Activated CD8-positive, alpha-beta T cell treated with anti-CD3 and anti-CD28 coated beads, Interleukin-2, amount 10 ng/mL, durations not matched to agents 7 days and 5 days (primary cell): ENCODE measurements at regions of chr1 and their contacts with region 1.

Region 1: DNA sequence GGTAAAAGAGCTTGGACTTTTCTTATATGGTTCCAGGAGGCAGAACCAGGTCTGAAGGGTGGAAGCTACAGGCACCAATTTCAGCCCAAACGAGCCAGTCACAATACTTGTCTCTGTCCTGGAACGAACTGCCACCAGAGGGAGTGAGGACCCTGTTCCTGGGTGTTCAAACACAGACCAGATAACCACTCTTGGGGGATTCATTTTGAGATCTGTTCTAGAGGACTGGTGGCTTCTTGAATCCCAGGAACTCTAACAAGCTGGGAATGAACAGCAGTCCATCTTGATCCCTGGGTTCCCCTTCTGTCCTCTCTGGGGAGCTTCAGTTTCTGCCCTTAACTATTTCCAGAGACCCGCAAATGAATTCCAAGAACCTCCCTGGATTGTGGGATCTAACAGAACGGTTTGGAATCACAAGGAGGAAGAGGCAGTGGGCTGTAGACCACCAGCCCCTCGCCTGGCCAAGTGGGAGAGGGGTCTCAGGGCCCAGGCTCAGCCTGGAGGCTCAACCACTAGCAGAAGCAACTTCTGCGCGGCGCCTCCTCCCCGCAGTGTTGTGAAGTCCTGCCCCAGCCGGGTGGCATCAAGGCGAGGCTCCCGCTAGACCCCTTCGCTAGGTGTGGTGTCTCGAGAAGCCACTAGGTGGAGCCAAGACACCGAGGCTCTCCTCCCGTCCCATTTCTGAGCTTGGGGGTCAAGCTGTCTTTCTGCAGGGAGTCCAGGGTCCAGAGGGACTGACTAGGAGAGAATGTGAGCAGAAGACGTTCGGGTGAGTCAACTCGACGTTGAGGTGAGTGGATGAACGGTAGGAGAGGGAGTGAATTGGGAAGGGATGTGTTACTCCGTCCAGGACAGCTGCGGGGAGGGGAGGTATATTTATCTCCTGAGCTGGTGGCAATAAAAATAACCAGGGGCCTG is 12.1 kb upstream of the NES start:
- DNase-seq: peak; percentile 83
- ATAC-seq: peak; percentile 97
- H3K4me3 Mint-ChIP-seq: no peak overlapping the region
- H3K27ac Mint-ChIP-seq: no peak overlapping the region
- H3K4me1 Mint-ChIP-seq: peaks cover 36% of the 10 kb centered on the region
- H3K27me3 Mint-ChIP-seq: peaks cover 55% of the 10 kb centered on the region

Region 2: DNA sequence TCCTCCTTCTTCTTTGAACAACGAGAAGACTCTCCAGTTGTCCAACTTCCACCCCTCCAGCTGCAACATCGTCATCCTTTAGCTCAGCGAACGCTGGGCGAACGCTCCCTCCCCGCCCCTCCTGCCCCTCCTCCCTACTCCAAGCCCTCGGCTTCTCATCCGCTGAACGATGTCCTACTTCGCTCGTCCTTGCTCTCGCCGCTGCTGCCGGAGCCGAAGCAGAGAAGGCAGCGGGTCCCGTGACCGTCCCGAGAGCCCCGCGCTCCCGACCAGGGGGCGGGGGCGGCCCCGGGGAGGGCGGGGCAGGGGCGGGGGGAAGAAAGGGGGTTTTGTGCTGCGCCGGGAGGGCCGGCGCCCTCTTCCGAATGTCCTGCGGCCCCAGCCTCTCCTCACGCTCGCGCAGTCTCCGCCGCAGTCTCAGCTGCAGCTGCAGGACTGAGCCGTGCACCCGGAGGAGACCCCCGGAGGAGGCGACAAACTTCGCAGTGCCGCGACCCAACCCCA is 47.5 kb before region 1 on chr1 and contains the start of gene BCAN:
- CTCF ChIA-PET with region 1: interaction called, 19 read pairs
- POLR2A ChIA-PET with region 1: no interaction called
- DNase-seq: no peak
- ATAC-seq: peak; percentile 30
- H3K4me3 Mint-ChIP-seq: peak within 1 kb of the TSS; percentile 29
- H3K27ac Mint-ChIP-seq: no peak within 1 kb of the TSS
- H3K4me1 Mint-ChIP-seq: peaks cover 37% of the 10 kb centered on the region
- H3K27me3 Mint-ChIP-seq: peaks cover 77% of the 10 kb centered on the region
- total RNA-seq, gene BCAN: not detected

Region 3: GRCh38 chr1:156659994-156660751 is 29.1 kb before region 1 on chr1:
- CTCF ChIA-PET with region 1: interaction called, 135 read pairs
- POLR2A ChIA-PET with region 1: no interaction called
- DNase-seq: peak; percentile 96
- ATAC-seq: peak; percentile 87
- H3K4me3 Mint-ChIP-seq: peak overlapping the region; percentile 72
- H3K27ac Mint-ChIP-seq: peak overlapping the region; percentile 90
- H3K4me1 Mint-ChIP-seq: peaks cover 77% of the 10 kb centered on the region
- H3K27me3 Mint-ChIP-seq: peaks cover 29% of the 10 kb centered on the region

Region 4: GRCh38 chr1:156677616-156678596 is 11.4 kb before region 1 on chr1:
- CTCF ChIA-PET with region 1: interaction called, 69 read pairs
- POLR2A ChIA-PET with region 1: no interaction called
- DNase-seq: peak; percentile 41
- ATAC-seq: peak; percentile 43
- H3K4me3 Mint-ChIP-seq: no peak overlapping the region
- H3K27ac Mint-ChIP-seq: no peak overlapping the region
- H3K4me1 Mint-ChIP-seq: peaks cover 16% of the 10 kb centered on the region
- H3K27me3 Mint-ChIP-seq: peaks cover 69% of the 10 kb centered on the region

Region 5: DNA sequence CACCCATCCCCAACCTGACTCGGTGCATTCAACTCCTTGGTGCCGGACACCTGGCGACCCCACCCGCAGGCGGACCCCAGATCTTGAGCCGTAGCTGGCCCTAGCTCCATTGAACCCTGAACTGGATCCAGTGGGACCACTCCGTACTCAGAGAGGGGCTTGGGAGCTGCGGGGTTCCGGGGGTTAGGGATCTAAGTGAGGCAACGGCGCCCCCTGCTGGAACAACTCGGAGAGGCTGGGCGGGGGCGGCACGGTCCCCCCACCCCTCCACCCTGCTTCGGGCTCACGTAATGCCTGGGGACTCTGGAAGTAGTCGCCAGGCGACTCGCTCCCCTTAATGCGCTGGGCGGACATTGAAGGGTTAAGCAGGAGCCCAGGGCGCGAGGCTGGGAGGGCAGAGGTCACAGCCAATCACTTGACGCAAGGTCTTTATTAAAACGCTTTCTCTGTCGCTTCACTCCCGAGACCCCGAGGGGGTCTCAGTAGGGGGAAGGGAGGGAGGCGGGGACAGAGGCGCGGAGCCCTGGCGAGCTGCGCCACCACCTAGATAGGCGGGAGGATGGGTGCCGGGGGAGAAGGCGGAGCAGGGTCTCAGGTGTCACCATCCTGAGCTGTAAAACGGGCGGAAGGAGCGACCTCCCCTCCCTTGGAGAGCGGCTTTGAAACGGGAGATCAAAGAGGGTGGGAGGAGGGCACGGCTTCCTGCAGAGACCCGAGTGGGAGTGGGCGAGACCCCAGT is 16.8 kb after region 1 on chr1:
- CTCF ChIA-PET with region 1: interaction called, 311 read pairs
- POLR2A ChIA-PET with region 1: interaction called, 9 read pairs
- DNase-seq: peak; percentile 70
- ATAC-seq: peak; percentile 65
- H3K4me3 Mint-ChIP-seq: peak overlapping the region; percentile 71
- H3K27ac Mint-ChIP-seq: no peak overlapping the region
- H3K4me1 Mint-ChIP-seq: peaks cover 28% of the 10 kb centered on the region
- H3K27me3 Mint-ChIP-seq: peaks cover 33% of the 10 kb centered on the region

Region 6: DNA sequence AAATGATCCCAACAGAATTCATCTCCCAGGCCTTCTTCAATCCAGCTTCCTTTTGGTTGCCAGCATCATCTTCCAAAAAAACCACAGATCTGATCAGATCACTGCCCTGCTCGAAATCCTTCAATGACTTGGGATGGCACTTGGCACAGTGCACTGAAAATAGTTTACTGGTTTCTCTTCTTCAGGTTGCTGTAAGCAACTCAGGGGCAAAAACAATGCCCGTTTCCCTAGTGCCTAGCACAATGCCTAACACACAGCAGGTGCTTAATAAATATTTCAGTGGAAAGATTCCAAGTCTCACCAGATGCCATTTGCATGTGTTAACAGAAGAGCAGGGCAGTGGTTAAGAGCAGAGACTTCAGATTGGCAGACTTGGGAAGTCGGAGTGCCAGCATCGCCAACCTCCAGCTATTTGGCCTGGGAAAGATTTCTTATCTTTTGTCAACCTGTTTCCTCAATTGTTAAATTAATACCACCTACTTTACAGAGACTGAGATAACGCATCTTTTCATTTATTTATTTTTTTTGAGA is 28.0 kb after region 1 on chr1:
- CTCF ChIA-PET with region 1: interaction called, 543 read pairs
- POLR2A ChIA-PET with region 1: no interaction called
- DNase-seq: no peak
- ATAC-seq: no peak
- H3K4me3 Mint-ChIP-seq: no peak overlapping the region
- H3K27ac Mint-ChIP-seq: no peak overlapping the region
- H3K4me1 Mint-ChIP-seq: peaks cover 5% of the 10 kb centered on the region
- H3K27me3 Mint-ChIP-seq: no peaks in the 10 kb centered on the region

Region 7: GRCh38 chr1:156797212-156797871 is 108.0 kb after region 1 on chr1:
- CTCF ChIA-PET with region 1: interaction called, 12 read pairs
- POLR2A ChIA-PET with region 1: no interaction called
- DNase-seq: peak; percentile 81
- ATAC-seq: peak; percentile 76
- H3K4me3 Mint-ChIP-seq: no peak overlapping the region
- H3K27ac Mint-ChIP-seq: no peak overlapping the region
- H3K4me1 Mint-ChIP-seq: peaks cover 24% of the 10 kb centered on the region
- H3K27me3 Mint-ChIP-seq: no peaks in the 10 kb centered on the region